HCT116 (cell line): ENCODE measurements at regions of chr18 and their contacts with region 1.

Region 1: GRCh38 chr18:12934454-12935071 is 13.2 kb upstream of the SEH1L start:
- DNase-seq: peak; percentile 71
- ATAC-seq: peak; percentile 100
- H3K4me3 ChIP-seq: no peak overlapping the region
- H3K27ac ChIP-seq: no peak overlapping the region
- H3K4me1 ChIP-seq: peaks cover 0 to 3% of the 10 kb centered on the region in 2 experiments; a peak in 1 of 4 replicates
- H3K27me3 ChIP-seq: no peaks in the 10 kb centered on the region
- CTCF ChIP-seq: peak; percentile 82 to 98 (median 93)
- POLR2A ChIP-seq: no peak
- RAD21 ChIP-seq: peak; percentile 97

Region 2: GRCh38 chr18:12391618-12392165 is 542.9 kb before region 1 on chr18:
- CTCF ChIA-PET with region 1: interaction called, 4 read pairs
- POLR2A ChIA-PET with region 1: no interaction called
- RAD21 ChIA-PET with region 1: no interaction called
- intact Hi-C with region 1: loop called (anchors 1 kb)
- DNase-seq: peak; percentile 52
- ATAC-seq: peak; percentile 69
- H3K4me3 ChIP-seq: no peak overlapping the region
- H3K27ac ChIP-seq: no peak overlapping the region
- H3K4me1 ChIP-seq: peaks cover 10 to 25% of the 10 kb centered on the region in 2 experiments; a peak in 3 of 4 replicates
- H3K27me3 ChIP-seq: no peaks in the 10 kb centered on the region
- CTCF ChIP-seq: peak; percentile 87 to 95 (median 92)
- POLR2A ChIP-seq: no peak
- RAD21 ChIP-seq: peak; percentile 95

Region 3: DNA sequence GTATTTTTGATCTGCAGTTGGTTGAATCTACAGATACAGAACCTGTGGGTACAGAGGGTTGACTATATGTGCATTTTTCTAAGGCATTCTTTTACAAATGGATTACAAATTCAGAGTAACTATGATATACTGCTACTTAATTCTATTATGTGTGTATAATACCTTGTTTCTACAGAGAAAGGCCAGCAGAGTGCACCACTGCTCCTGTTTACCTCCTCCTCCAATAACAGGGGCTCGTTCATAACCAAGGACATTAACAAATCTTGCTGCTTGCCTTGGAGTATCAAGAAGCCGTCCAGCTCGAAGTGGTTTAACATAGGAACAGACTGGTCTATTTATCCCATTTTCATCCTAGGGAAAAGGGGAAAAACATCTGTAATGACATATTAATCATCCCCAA is 248.5 kb before region 1 on chr18:
- CTCF ChIA-PET with region 1: no interaction called
- POLR2A ChIA-PET with region 1: no interaction called
- RAD21 ChIA-PET with region 1: no interaction called
- intact Hi-C with region 1: loop called (anchors 1 kb)
- DNase-seq: peak; percentile 22
- ATAC-seq: peak; percentile 91
- H3K4me3 ChIP-seq: no peak overlapping the region
- H3K27ac ChIP-seq: no peak overlapping the region
- H3K4me1 ChIP-seq: no peaks in the 10 kb centered on the region
- H3K27me3 ChIP-seq: no peaks in the 10 kb centered on the region
- CTCF ChIP-seq: peak; percentile 18 to 43 (median 37); a peak in 3 of 6 replicates
- POLR2A ChIP-seq: no peak
- RAD21 ChIP-seq: peak; percentile 30; the same call in 1 of the 2 replicates

Region 4: GRCh38 chr18:12726774-12727550 is 207.6 kb before region 1 on chr18:
- CTCF ChIA-PET with region 1: interaction called, 46 read pairs
- POLR2A ChIA-PET with region 1: no interaction called
- RAD21 ChIA-PET with region 1: interaction called in 1 of 2 experiments, 4 read pairs
- intact Hi-C with region 1: loop called (anchors 1 kb)
- DNase-seq: peak; percentile 49
- ATAC-seq: peak; percentile 63
- H3K4me3 ChIP-seq: no peak overlapping the region
- H3K27ac ChIP-seq: no peak overlapping the region
- H3K4me1 ChIP-seq: peaks cover 0 to 8% of the 10 kb centered on the region in 2 experiments; a peak in 3 of 4 replicates
- H3K27me3 ChIP-seq: no peaks in the 10 kb centered on the region
- CTCF ChIP-seq: peak; percentile 71 to 92 (median 86); a peak in 5 of 6 replicates
- POLR2A ChIP-seq: no peak
- RAD21 ChIP-seq: peak; percentile 79

Region 5: DNA sequence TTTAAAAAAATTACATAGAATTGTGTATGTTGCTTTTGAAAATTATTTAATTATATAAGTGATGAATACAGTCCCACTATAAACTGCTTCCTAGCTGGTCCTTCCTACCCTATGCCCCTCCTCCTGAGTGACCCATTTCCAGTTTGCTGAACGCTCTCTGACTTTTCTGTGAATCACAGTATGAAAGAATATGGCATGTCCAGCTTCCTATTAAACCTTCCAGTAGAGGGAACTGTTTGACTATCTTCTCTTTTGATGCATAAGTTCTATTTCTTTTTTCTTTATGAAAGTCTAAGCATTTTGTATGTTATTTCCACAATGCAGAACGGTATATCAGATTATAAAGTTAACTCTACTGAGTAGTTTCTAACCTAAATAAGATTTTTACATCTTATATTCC is 190.5 kb before region 1 on chr18:
- CTCF ChIA-PET with region 1: interaction called, 29 read pairs
- POLR2A ChIA-PET with region 1: no interaction called
- RAD21 ChIA-PET with region 1: interaction called, 3 to 8 read pairs
- intact Hi-C with region 1: loop called (anchors 1 kb)
- DNase-seq: peak; percentile 42
- ATAC-seq: peak; percentile 94
- H3K4me3 ChIP-seq: no peak overlapping the region
- H3K27ac ChIP-seq: no peak overlapping the region
- H3K4me1 ChIP-seq: peaks cover 4 to 5% of the 10 kb centered on the region in 2 experiments; a peak in 2 of 4 replicates
- H3K27me3 ChIP-seq: no peaks in the 10 kb centered on the region
- CTCF ChIP-seq: peak; percentile 36 to 71 (median 66)
- POLR2A ChIP-seq: no peak
- RAD21 ChIP-seq: peak; percentile 79